OCI-LY7 (cell line): ENCODE measurements at regions of chr2 and their contacts with region 1.

Region 1: GRCh38 chr2:54787755-54788366 is 64.4 kb downstream of the EML6 start:
- DNase-seq: peak; percentile 93
- H3K4me3 ChIP-seq: peak overlapping the region; percentile 71
- H3K27ac ChIP-seq: peak overlapping the region; percentile 95
- H3K4me1 ChIP-seq: peaks cover 81% of the 10 kb centered on the region
- CTCF ChIP-seq: no peak

Region 2: DNA sequence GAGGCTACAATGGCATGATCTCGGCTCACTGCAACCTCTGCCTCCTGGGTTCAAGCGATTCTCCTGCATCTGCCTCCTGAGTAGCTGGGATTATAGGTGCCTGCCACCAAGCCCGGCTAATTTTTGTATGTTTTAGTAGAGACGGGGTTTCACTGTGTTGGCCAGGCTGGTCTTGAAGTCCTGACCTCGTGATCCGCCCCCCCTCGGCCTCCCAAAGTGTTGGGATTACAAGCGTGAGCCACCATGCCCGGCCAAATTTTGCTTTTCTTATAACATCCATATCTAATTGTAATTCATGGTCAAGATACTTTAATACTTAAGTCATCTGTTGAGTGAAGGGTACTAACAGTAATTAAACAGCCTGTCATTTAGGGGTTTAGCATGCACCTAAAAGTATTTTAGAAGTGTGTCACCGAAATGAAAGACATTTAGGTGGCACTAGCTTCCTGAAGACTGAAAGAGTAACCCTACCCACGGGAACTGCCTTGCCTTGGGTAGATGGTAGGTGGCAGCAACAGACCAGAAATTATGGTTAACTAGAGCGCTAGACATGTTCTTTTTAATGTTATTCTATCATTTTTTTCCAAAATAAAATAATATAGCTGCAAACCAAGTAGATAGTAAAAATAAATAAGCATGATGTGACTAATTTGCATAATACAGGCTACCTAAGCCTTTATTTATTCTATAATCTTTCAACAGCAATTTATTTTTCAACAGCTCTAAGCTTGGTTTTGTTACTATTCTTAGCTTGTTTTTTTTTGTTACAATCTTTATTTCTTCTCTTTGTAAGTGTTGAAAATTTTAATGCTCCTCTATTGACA is 681.0 kb before region 1 on chr2:
- CTCF ChIA-PET with region 1: no interaction called
- POLR2A ChIA-PET with region 1: interaction called, 3 read pairs
- intact Hi-C with region 1: loop called (anchors 10 kb)
- DNase-seq: peak; percentile 84
- H3K4me3 ChIP-seq: no peak overlapping the region
- H3K27ac ChIP-seq: peak overlapping the region; percentile 50
- H3K4me1 ChIP-seq: peaks cover 72% of the 10 kb centered on the region
- CTCF ChIP-seq: peak; percentile 98

Region 3: DNA sequence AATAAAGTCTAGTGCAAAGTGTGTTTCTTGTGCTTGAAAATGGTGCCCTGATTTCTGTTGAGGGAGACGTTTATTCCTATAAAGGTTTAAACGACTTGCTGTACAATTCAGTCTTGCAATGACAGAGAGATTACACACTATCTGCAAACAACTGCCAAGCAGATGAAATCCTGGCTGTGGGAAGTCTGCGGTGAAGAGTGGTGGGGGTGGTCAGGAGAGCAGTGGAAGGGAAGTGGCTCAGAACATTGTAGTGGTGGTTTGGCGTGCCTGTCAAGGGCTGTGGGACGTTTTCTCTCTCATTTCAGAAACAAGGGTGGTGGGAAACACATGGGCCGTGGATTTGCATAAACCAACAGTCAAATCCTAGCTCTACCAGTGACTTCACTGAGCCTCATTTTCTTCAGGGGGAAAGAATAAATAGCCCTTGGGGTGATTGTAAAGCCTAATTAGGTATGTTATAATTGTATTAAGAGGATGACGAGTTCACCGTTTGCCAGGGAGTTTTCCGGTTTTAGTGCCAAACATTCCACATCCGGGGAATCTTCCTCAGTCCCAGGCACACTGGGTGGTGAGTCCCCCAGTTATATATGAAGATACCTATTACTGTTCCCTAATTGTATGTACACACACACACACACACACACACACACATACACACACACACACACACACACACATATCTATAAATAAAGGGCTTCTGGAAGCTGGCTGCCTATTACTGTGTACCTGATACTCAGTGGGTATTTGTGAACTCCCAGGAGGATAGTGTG is 216.8 kb before region 1 on chr2:
- CTCF ChIA-PET with region 1: no interaction called
- POLR2A ChIA-PET with region 1: no interaction called
- intact Hi-C with region 1: loop called (anchors 5 kb)
- DNase-seq: peak; percentile 84
- H3K4me3 ChIP-seq: peak overlapping the region; percentile 51
- H3K27ac ChIP-seq: peak overlapping the region; percentile 87
- H3K4me1 ChIP-seq: peaks cover 92% of the 10 kb centered on the region
- CTCF ChIP-seq: no peak

Region 4: GRCh38 chr2:54723131-54723995 is 64.5 kb before region 1 on chr2 and contains the start of gene EML6:
- CTCF ChIA-PET with region 1: no interaction called
- POLR2A ChIA-PET with region 1: interaction called, 13 read pairs
- intact Hi-C with region 1: loop called (anchors 1 kb)
- DNase-seq: peak; percentile 99
- H3K4me3 ChIP-seq: peak within 1 kb of the TSS; percentile 79
- H3K27ac ChIP-seq: peak within 1 kb of the TSS; percentile 69
- H3K4me1 ChIP-seq: peaks cover 42% of the 10 kb centered on the region
- CTCF ChIP-seq: peak; percentile 65
- total RNA-seq, gene EML6: 298 and 367 TPM in 2 replicates

Region 5: DNA sequence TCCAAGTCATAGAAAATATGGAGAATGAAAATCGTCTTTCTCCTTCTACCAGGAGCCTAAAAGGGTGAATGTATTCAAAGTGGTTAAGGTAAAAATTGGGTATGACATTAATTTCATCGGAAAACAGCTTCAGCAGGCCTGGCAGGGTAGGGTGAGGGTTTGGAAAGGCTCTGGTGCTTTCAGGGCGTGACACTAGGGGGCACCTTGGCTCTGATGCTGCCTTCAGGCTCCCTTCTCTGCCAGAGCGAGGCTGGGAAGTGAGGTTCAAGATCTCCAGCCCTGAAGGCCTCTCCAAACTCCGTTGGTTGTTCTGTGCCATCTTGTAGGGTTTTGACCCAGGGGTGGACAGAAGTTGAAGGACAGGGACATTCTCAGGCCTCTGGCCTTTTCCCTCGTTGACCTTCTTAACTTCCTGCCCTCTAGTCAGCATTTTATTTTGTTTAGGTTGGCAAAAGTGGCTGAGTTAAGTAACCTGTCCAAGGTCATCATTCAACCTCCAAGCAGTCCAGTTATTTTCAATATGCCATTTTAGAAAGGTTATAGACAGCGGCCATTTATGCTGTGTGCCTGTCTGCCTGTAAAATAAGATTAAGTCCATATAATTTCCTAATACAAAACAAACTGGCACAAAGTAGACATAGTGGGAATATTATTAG is 24.1 kb before region 1 on chr2:
- CTCF ChIA-PET with region 1: no interaction called
- POLR2A ChIA-PET with region 1: interaction called, 92 read pairs
- intact Hi-C with region 1: loop called (anchors 1 kb)
- DNase-seq: peak; percentile 40
- H3K4me3 ChIP-seq: no peak overlapping the region
- H3K27ac ChIP-seq: no peak overlapping the region
- H3K4me1 ChIP-seq: peaks cover 91% of the 10 kb centered on the region
- CTCF ChIP-seq: peak; percentile 84

Region 6: DNA sequence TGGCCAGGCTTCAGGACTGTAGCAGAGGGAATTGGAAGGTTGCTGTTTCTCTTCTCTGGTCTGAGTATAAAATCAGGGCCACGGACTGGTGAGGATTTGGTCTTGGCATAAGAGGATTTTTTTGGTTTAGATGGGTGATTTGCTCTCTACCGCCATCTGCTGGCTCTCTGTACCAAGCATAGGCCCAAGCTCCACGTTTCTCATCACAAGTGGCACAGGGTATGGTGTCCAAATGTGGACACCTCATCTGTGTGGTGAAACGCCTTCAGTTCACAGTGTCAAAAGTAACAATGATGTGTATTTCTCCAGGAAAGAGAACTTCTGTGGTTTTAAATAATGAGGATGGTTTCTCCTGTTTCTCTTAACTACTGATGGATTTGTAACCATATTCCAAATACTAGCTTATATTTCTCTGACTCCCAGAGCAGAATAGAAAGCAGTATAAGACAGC is 50.7 kb after region 1 on chr2:
- CTCF ChIA-PET with region 1: interaction called, 3 read pairs
- POLR2A ChIA-PET with region 1: no interaction called
- intact Hi-C with region 1: loop called (anchors 1 kb)
- DNase-seq: peak; percentile 82
- H3K4me3 ChIP-seq: no peak overlapping the region
- H3K27ac ChIP-seq: peak overlapping the region; percentile 35
- H3K4me1 ChIP-seq: peaks cover 24% of the 10 kb centered on the region
- CTCF ChIP-seq: peak; percentile 98